ENCODE measurements at regions of chr11 and their contacts with region 1.

Region 1: DNA sequence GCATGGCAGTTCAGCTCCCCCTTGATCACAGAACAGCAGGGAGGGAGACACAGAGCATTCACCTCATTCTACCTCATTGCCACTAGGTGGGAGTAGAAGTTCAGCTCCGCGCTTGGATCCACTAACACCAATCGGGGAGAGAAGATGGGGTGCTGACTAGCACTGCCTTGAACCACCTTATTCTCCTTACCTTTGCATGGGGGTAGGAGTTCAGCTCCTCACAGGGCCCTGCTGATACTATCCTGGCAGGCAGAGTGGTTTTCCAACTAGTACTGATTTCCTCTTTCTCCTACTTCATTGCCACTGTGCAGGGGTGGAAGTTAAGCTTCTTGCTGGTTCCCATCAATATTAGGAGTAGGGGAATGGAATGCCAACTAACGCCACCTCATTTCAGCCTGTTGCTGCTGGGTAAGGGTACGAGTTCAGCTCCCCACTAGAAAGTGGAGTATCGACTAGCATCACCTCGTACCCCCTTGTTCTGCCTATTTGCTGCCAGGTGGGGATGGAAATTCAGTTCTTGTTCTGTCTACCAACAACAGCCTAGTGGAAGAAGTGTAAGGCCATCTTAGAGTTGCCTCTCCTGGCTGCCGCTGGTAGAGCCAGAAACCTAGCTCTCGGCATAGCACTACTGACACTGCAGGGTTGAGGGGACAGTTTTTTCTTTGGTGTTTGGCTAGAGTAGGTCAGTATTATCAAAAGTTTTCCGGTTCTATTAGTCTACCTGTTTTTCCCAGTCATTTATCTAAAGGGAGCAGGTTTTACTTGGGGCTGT is 550.9 kb upstream of the CCDC90B start:
- DNase-seq: peak; percentile 69
- H3K4me3 ChIP-seq: no peak overlapping the region
- H3K27ac ChIP-seq: peak overlapping the region in 1 of 2 experiments; percentile 60; a peak in 1 of 4 replicates
- H3K4me1 ChIP-seq: peaks cover 0 to 6% of the 10 kb centered on the region in 2 experiments; a peak in 1 of 4 replicates
- H3K27me3 ChIP-seq: no peaks in the 10 kb centered on the region
- CTCF ChIP-seq: peak; percentile 84
- EP300 ChIP-seq: no peak
- RAD21 ChIP-seq: peak; percentile 98

Region 2: GRCh38 chr11:83819933-83820549 is 17.0 kb before region 1 on chr11:
- CTCF ChIA-PET with region 1: interaction called, 36 read pairs
- POLR2A ChIA-PET with region 1: no interaction called
- DNase-seq: peak; percentile 29
- H3K4me3 ChIP-seq: no peak overlapping the region
- H3K27ac ChIP-seq: no peak overlapping the region
- H3K4me1 ChIP-seq: peaks cover 2 to 30% of the 10 kb centered on the region in 2 experiments; a peak in 3 of 4 replicates
- H3K27me3 ChIP-seq: no peaks in the 10 kb centered on the region
- CTCF ChIP-seq: peak; percentile 80
- EP300 ChIP-seq: no peak
- RAD21 ChIP-seq: peak; percentile 95

Region 3: DNA sequence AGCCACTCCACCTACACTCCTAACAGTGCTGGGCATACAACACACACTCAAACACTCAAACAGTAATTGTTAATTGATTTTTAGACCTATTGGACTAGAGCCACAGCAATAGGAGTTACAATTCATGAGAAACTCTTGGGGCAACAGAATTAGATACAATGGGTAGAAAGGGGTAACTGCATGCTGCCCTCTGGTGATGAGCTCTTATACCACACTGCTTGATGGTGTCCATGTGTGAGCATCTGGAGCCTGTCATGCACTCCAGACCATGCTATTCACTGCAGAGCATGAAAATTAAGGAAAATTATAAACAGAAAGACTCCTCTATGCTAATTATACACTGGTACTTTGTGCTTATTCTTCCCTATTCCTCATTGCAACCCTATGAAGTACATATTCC is 424.6 kb after region 1 on chr11:
- CTCF ChIA-PET with region 1: interaction called, 11 read pairs
- POLR2A ChIA-PET with region 1: no interaction called
- DNase-seq: peak; percentile 3
- H3K4me3 ChIP-seq: no peak overlapping the region
- H3K27ac ChIP-seq: peak overlapping the region in 1 of 2 experiments; percentile 34; a peak in 1 of 4 replicates
- H3K4me1 ChIP-seq: peaks cover 0 to 3% of the 10 kb centered on the region in 2 experiments; a peak in 1 of 4 replicates
- H3K27me3 ChIP-seq: no peaks in the 10 kb centered on the region; the same call in 1 of the 2 replicates
- CTCF ChIP-seq: peak; percentile 19; the same call in 1 of the 2 replicates
- EP300 ChIP-seq: peak in 1 of 2 experiments; percentile 22; a peak in 1 of 4 replicates
- RAD21 ChIP-seq: peak; percentile 45

Region 4: DNA sequence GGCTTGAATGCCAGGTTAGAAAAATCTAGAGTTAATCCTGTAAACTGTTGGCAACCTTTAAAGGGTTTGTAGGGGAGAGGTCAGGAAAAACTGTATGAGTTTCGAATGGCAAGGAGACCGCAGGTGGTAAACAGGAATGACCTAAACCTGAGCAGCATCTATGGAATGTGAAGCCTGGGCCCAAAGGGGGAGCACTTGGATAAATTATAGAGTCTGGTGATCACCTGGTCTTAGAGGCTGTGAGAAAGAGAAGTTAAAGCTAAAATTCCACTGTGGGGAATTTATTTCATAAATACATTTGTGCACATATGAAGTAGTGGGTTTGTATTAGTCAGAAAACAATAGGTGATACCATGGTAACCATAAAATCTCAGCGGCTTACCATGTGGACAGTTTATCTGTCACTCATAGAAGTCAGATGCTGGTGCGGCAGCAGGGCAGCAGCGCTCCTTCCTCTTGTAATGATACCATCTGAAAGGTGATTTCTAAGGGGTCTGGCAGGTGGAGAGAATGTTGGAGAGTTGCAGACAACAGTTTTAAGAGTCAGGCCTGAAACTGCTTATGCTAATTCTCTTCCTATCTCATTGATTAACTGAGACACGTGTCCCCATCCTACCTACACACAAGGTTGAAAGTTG is 553.5 kb after region 1 on chr11:
- CTCF ChIA-PET with region 1: interaction called, 59 read pairs
- POLR2A ChIA-PET with region 1: no interaction called
- DNase-seq: no peak
- H3K4me3 ChIP-seq: no peak overlapping the region
- H3K27ac ChIP-seq: no peak overlapping the region
- H3K4me1 ChIP-seq: no peaks in the 10 kb centered on the region
- H3K27me3 ChIP-seq: no peaks in the 10 kb centered on the region
- CTCF ChIP-seq: peak; percentile 31; the same call in 1 of the 2 replicates
- EP300 ChIP-seq: no peak
- RAD21 ChIP-seq: peak; percentile 35

Region 5: GRCh38 chr11:84536456-84536855 is 699.4 kb after region 1 on chr11:
- CTCF ChIA-PET with region 1: interaction called, 26 read pairs
- POLR2A ChIA-PET with region 1: no interaction called
- DNase-seq: no peak
- H3K4me3 ChIP-seq: no peak overlapping the region
- H3K27ac ChIP-seq: no peak overlapping the region
- H3K4me1 ChIP-seq: peaks cover 0 to under 1% of the 10 kb centered on the region in 2 experiments; a peak in 2 of 4 replicates
- H3K27me3 ChIP-seq: no peaks in the 10 kb centered on the region
- CTCF ChIP-seq: no peak
- EP300 ChIP-seq: no peak
- RAD21 ChIP-seq: no peak

Region 6: DNA sequence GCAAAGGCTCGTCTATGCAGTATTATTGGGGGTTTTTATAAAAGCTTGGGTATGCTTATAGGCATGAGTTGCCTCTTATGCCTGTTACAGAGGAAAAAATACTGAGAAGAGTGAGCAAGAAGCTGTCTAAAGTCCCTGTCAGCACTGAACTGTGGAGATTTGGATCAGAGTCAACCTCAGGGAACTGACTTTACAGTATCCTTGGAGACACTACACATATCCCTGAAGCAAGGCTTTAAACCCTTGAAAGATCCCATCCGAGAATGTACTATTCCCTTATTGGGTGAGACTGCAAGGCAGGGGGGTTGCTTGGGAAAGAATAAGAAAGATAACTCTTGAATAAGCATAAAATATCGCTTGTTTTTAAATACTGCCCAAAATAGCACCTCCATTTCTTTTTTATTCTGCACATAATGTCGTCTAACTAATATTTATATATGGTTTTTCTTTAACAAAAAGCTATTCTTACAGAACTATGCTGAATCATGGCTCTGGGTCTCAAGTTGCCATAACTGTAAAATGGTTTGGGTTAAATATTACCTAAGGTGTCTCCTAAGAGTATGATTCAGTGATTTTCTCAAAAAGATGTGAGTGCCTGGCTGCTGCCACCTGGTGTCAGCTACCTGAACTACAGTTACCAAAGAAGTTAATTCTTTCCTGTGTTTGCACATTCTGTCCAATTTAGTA is 727.3 kb after region 1 on chr11:
- CTCF ChIA-PET with region 1: interaction called, 57 read pairs
- POLR2A ChIA-PET with region 1: no interaction called
- DNase-seq: peak; percentile 16
- H3K4me3 ChIP-seq: no peak overlapping the region; a peak in 1 of 4 replicates
- H3K27ac ChIP-seq: no peak overlapping the region
- H3K4me1 ChIP-seq: no peaks in the 10 kb centered on the region
- H3K27me3 ChIP-seq: no peaks in the 10 kb centered on the region
- CTCF ChIP-seq: peak; percentile 90
- EP300 ChIP-seq: no peak
- RAD21 ChIP-seq: peak; percentile 74